ENCODE measurements at regions of chr1 and their contacts with region 1.

Region 1: DNA sequence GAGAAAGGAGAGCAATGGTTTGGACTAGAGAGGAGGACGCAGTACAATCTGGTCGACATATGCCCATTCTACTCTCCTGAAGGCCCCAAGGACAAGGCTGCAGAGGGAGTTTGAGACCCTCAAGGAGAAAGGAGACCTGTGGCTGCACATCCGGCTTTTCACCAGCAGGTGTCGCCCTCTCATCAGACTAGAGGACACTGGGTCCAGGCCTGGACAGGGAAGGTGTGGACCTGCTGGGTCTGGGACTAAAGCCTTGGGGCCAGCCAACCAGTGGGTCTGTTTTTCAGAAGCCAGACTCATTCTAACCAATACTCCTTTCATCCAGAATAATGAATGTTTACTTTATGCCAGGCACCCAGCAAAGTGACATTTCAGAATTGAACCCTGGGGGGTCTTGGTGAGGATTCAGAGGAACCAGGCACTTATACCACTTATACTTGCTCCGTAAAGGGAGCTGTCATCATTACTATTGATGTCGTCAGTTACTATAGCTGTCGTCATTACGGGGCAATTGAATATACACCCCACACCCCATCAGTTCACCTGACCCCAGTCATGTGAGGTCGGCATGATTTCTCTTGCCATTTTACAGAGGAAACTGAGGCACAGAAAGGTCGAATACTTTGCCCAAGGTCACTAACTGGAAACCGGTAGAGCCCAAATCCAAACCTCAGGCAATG is 5.1 kb downstream of the SRARP start:
- DNase-seq: peak; percentile 59 to 84
- ATAC-seq: peak; percentile 15 to 17
- H3K4me3 ChIP-seq: no peak overlapping the region
- H3K27ac ChIP-seq: peak overlapping the region in 3 of 4 donors; percentile 12 to 100 (median 97)
- H3K4me1 ChIP-seq: peaks cover 13 to 18% of the 10 kb centered on the region in 2 donors
- H3K27me3 ChIP-seq: no peaks in the 10 kb centered on the region
- CTCF ChIP-seq: peak; percentile 95 to 99 (median 99)
- POLR2A ChIP-seq: peak in 1 of 2 donors; percentile 28

Region 2: GRCh38 chr1:15038232-15039016 is 970.7 kb before region 1 on chr1:
- in situ Hi-C with region 1: no loop called
- intact Hi-C with region 1: no loop called
- DNase-seq: no peak
- ATAC-seq: no peak
- H3K4me3 ChIP-seq: no peak overlapping the region
- H3K27ac ChIP-seq: no peak overlapping the region
- H3K4me1 ChIP-seq: no peaks in the 10 kb centered on the region
- H3K27me3 ChIP-seq: no peaks in the 10 kb centered on the region
- CTCF ChIP-seq: peak in 1 of 5 experiments; percentile 16
- POLR2A ChIP-seq: no peak

Region 3: GRCh38 chr1:15714406-15715136 is 294.6 kb before region 1 on chr1:
- in situ Hi-C with region 1: no loop called
- intact Hi-C with region 1: loop called (anchors 10 kb)
- DNase-seq: peak; percentile 86 to 87
- ATAC-seq: peak; percentile 76 to 80
- H3K4me3 ChIP-seq: peak overlapping the region in 1 of 4 donors; percentile 2
- H3K27ac ChIP-seq: peak overlapping the region; percentile 93 to 96 (median 96)
- H3K4me1 ChIP-seq: peaks cover 83 to 95% of the 10 kb centered on the region in 2 donors
- H3K27me3 ChIP-seq: no peaks in the 10 kb centered on the region
- CTCF ChIP-seq: no peak
- POLR2A ChIP-seq: peak; percentile 43 to 74

Region 4: DNA sequence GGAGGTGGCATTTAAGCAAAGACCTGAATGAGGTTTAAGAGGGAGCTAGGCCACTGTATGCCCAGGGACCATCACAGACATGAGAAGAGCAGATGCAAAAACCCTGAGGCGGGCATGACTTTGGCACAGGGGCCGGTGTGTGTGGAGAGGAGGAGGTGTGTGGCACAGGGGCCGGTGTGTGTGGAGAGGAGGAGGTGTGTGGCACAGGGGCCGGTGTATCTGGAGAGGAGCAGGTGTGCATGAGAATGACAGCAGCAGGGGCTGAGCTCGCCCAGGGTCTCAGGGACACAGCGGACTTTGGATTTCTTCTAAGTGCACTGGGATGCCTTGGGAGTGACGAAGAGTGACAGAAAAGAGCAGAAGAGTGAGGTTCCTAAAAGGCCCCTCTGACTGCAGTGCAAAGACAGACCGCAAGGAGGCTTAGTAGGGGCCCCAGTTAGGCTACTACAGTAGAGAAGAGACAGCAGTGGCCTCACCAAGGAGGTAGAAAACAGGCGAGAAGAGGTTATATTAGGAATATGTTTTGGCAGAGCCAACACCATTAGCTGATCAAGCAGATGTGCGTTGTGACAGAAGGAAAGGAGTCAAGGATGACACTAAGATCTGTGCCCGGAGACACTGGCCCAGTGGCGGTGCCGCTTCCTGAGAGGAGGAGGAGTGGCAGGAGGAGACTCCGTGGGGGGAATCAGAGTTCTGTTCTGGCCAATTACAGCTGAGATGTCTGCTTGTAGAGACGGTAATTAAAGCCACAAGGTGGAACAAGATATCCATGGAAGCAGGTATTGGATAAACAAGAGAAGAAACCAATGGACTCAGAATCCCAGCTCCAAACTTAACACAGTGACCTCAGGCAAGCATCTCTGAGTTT is 51.7 kb before region 1 on chr1:
- in situ Hi-C with region 1: no loop called
- intact Hi-C with region 1: no loop called
- DNase-seq: no peak
- ATAC-seq: no peak
- H3K4me3 ChIP-seq: no peak overlapping the region
- H3K27ac ChIP-seq: no peak overlapping the region
- H3K4me1 ChIP-seq: peaks cover 33 to 38% of the 10 kb centered on the region in 2 donors
- H3K27me3 ChIP-seq: no peaks in the 10 kb centered on the region
- CTCF ChIP-seq: peak in 1 of 5 experiments; percentile 11
- POLR2A ChIP-seq: no peak

Region 5: DNA sequence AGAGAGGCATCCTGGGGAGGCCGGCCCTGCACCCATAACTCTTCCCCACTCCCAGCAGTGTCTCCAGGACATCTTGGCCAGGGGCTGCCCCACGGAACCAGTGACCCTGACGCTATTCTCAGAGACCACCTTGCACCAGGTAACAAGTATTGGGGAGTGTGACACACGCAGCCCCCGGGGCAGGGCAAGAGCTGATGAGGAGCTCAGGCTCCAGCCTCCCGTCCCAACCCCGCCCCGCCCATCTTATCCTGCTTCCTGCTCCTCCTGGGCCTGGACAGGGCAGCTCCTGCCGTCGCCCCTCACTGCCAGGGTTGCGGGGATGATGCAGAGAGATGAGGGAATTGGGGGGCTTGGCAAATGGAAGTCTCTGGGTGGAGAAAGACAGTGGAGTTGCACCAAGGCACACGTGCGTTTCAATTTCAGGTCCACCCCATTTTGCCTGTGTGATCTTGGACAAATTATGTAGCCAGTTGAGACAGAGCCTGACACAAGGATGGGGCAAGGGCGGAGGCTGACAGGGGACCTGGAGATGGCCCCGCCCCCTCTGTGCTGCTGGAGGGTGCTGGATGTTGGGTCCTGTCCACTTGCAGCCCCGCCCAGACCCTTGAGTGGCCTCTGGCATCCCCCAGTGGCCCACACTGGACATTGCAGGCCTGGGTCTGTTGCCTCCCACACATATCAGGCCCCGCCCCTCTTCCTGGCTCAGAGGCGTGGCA is 23.4 kb after region 1 on chr1:
- in situ Hi-C with region 1: no loop called
- intact Hi-C with region 1: loop called (anchors 1 kb)
- DNase-seq: peak; percentile 76 to 94
- ATAC-seq: peak; percentile 89 to 91
- H3K4me3 ChIP-seq: no peak overlapping the region
- H3K27ac ChIP-seq: peak overlapping the region in 2 of 4 donors; percentile 12 to 19
- H3K4me1 ChIP-seq: peaks cover 5 to 6% of the 10 kb centered on the region in 2 donors
- H3K27me3 ChIP-seq: no peaks in the 10 kb centered on the region
- CTCF ChIP-seq: peak; percentile 96 to 100 (median 100)
- POLR2A ChIP-seq: no peak

Region 6: DNA sequence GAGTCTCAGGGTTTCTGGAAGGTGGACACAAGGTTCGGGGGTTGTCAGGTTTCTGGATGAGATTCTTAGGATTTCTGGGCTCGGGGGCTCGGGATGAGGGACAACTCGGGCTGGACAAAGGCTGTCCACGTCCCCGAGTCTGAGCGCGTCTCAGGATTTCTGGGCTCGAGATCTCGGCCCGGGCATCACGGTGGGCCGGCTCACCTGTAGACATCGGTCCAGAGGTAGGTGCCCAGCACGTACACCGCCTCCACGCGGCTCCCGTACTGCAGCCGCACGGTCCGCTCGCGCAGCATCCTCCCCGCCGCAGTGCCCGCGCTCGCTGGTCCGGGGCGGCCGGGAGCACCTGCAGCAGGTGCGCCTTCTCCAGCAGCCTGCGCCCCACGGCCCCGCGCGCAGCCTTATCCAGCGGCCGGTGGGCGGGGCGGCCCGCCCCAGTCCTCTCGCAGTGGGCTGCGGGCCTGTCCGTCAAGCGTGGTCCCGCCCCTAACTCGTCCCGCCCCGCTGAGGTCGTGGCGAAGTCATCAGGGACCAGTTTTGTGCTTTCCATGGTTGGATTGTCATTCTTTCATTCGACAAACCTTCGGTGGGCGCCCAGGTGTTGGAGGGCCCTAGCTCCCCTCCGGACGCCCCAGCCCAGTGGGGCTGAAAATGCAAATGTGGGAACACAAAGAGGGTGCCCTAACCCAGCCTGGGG is 1110.1 kb after region 1 on chr1 and contains the start of gene PADI2:
- in situ Hi-C with region 1: no loop called
- intact Hi-C with region 1: loop called (anchors 10 kb)
- DNase-seq: peak; percentile 63 to 83
- ATAC-seq: peak; percentile 22 to 28
- H3K4me3 ChIP-seq: peak within 1 kb of the TSS; percentile 60 to 77 (median 64)
- H3K27ac ChIP-seq: peak within 1 kb of the TSS; percentile 94 to 98 (median 96)
- H3K4me1 ChIP-seq: peaks cover 56 to 71% of the 10 kb centered on the region in 2 donors
- H3K27me3 ChIP-seq: no peaks in the 10 kb centered on the region
- CTCF ChIP-seq: no peak
- POLR2A ChIP-seq: peak; percentile 96 to 97
- total RNA-seq, gene PADI2: 156 to 176 (median 171) TPM

Measured in gastrocnemius medialis (tissue), 4 donors.